Esophagus muscularis mucosa (tissue), 4 donors: ENCODE measurements at regions of chr9 and their contacts with region 1.

Region 1: GRCh38 chr9:29211580-29212396 is 1638.5 kb upstream of the C9orf72 start:
- DNase-seq: no peak
- H3K4me3 ChIP-seq: peak overlapping the region; percentile 46 to 59 (median 50)
- H3K27ac ChIP-seq: no peak overlapping the region
- H3K4me1 ChIP-seq: peaks cover 14 to 40% (median 37%) of the 10 kb centered on the region in 4 donors
- H3K27me3 ChIP-seq: peaks cover 0 to 61% (median 34%) of the 10 kb centered on the region in 4 donors
- CTCF ChIP-seq: peak; percentile 63 to 85 (median 70)
- EP300 ChIP-seq: no peak
- POLR2A ChIP-seq: no peak

Region 2: DNA sequence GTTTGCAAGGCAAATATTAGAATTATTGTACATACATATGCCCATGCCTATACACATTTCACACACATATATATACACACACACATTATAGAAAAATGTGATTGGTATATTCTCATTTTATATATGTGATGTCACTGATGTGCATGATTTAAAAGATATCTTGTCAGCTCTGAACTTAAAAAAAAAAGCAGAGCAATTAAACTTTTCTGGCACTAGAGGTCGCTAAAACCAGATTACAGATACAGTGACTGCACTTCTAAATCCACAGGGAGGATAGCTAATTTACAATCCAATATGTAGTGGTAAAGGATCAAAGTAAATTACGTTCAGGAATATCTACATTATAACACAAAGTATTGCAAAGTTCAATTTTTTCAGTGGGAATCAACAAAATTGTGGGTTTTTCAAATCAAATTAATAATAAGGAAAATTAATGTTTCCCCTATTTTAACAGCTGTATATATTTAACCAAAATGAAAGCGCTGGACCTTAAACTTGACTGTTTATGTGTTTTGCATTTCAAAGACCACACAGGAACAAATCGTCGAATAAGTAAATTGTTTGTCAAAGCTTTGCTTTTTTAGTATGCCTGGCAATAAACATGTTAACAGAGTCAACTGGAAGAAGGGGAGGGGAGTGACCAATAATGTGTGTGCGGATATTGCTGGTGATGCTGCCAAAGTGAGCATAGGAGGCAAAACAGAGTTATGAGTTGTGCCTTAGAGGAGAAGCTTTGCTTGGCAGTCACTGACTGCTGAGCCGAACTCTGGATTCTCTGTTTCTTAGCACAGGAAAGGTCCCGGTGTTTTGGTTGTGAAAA is 437.2 kb before region 1 on chr9:
- intact Hi-C with region 1: loop called (anchors 10 kb)
- DNase-seq: no peak
- H3K4me3 ChIP-seq: no peak overlapping the region
- H3K27ac ChIP-seq: no peak overlapping the region
- H3K4me1 ChIP-seq: no peaks in the 10 kb centered on the region
- H3K27me3 ChIP-seq: no peaks in the 10 kb centered on the region
- CTCF ChIP-seq: peak; percentile 41 to 63 (median 53)
- EP300 ChIP-seq: no peak
- POLR2A ChIP-seq: no peak